MCF 10A (cell line): ENCODE measurements at regions of chr1 and their contacts with region 1.

Region 1: GRCh38 chr1:6554031-6554906 is at the start of gene NOL9:
- DNase-seq: peak; percentile 87
- H3K4me3 Mint-ChIP-seq: peak within 1 kb of the TSS; percentile 74
- H3K27ac Mint-ChIP-seq: peak within 1 kb of the TSS; percentile 74
- H3K4me1 Mint-ChIP-seq: peaks cover 9% of the 10 kb centered on the region
- H3K27me3 Mint-ChIP-seq: no peaks in the 10 kb centered on the region
- CTCF ChIP-seq: peak; percentile 94
- total RNA-seq, gene NOL9: 49.2 and 62.3 TPM in 2 replicates

Region 2: GRCh38 chr1:6427445-6428381 is 126.6 kb before region 1 on chr1:
- CTCF ChIA-PET with region 1: no interaction called
- POLR2A ChIA-PET with region 1: no interaction called
- intact Hi-C with region 1: no loop called
- DNase-seq: peak; percentile 81
- H3K4me3 Mint-ChIP-seq: no peak overlapping the region
- H3K27ac Mint-ChIP-seq: peak overlapping the region; percentile 23
- H3K4me1 Mint-ChIP-seq: peaks cover 17% of the 10 kb centered on the region
- H3K27me3 Mint-ChIP-seq: no peaks in the 10 kb centered on the region
- CTCF ChIP-seq: no peak

Region 3: GRCh38 chr1:6497183-6497897 is 56.9 kb before region 1 on chr1:
- CTCF ChIA-PET with region 1: interaction called, 26 read pairs
- POLR2A ChIA-PET with region 1: no interaction called
- intact Hi-C with region 1: no loop called
- DNase-seq: no peak
- H3K4me3 Mint-ChIP-seq: peak overlapping the region; percentile 71
- H3K27ac Mint-ChIP-seq: no peak overlapping the region
- H3K4me1 Mint-ChIP-seq: peaks cover 24% of the 10 kb centered on the region
- H3K27me3 Mint-ChIP-seq: no peaks in the 10 kb centered on the region
- CTCF ChIP-seq: no peak

Region 4: DNA sequence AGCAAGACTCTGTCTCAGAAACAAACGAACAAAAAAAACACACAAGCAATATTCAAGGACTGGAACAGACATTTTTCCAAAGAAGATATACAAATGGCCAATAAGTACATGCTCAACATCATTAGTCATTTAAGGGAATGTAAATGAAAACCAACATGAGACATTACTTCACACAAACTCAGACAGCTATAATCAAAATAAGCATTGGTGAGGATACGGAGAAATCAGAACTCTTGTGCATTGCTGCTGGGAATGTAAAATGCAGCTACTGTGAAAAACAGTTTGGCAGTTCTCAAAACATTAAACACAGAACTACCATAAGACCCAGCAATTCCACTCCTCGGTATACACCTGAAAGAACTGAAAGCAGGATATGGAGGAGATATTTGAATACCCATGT is 15.3 kb before region 1 on chr1:
- CTCF ChIA-PET with region 1: interaction called, 12 read pairs
- POLR2A ChIA-PET with region 1: no interaction called
- intact Hi-C with region 1: no loop called
- DNase-seq: no peak
- H3K4me3 Mint-ChIP-seq: no peak overlapping the region
- H3K27ac Mint-ChIP-seq: no peak overlapping the region
- H3K4me1 Mint-ChIP-seq: no peaks in the 10 kb centered on the region
- H3K27me3 Mint-ChIP-seq: no peaks in the 10 kb centered on the region
- CTCF ChIP-seq: no peak

Region 5: DNA sequence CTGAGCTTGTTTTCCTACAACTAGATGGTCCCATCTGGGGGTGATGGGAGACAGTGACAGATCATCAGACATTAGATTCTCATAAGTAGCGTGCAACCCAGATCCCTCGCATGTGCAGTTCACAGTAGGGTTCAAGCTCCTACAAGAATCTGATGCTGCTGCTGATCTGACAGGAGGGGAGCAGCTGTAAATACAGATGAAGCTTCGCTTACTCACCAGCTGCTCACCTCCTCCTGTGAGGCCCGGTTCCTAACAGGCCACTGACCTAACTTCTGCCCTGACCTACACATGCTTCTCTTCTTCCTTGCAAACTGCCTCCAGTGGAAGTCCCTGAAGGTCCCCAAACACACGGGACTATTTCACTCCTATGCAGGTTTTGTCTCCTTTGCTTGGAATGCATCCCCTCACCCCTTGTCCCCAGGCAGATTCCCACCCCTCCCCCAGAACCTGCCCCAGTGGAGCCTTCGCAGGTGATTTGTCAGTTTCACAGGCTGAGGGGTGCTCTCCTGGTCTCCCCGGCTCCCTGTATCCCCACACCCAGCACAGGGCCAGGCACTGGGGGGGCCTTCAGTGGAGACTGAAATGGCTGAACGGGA is 19.9 kb after region 1 on chr1:
- CTCF ChIA-PET with region 1: interaction called, 13 read pairs
- POLR2A ChIA-PET with region 1: interaction called, 33 read pairs
- intact Hi-C with region 1: no loop called
- DNase-seq: no peak
- H3K4me3 Mint-ChIP-seq: no peak overlapping the region
- H3K27ac Mint-ChIP-seq: no peak overlapping the region
- H3K4me1 Mint-ChIP-seq: peaks cover 6% of the 10 kb centered on the region
- H3K27me3 Mint-ChIP-seq: peaks cover 6% of the 10 kb centered on the region
- CTCF ChIP-seq: no peak

Region 6: GRCh38 chr1:6602669-6603237 is 48.5 kb after region 1 on chr1 and contains the start of gene KLHL21:
- CTCF ChIA-PET with region 1: interaction called, 3 read pairs
- POLR2A ChIA-PET with region 1: interaction called, 30 read pairs
- intact Hi-C with region 1: loop called (anchors 1 kb)
- DNase-seq: peak; percentile 82
- H3K4me3 Mint-ChIP-seq: peak within 1 kb of the TSS; percentile 99
- H3K27ac Mint-ChIP-seq: peak within 1 kb of the TSS; percentile 99
- H3K4me1 Mint-ChIP-seq: peaks cover 17% of the 10 kb centered on the region
- H3K27me3 Mint-ChIP-seq: no peaks in the 10 kb centered on the region
- CTCF ChIP-seq: no peak
- total RNA-seq, gene KLHL21: 14.0 and 19.5 TPM in 2 replicates